ENCODE measurements at regions of chr14 and their contacts with region 1.

Region 1: GRCh38 chr14:35826218-35826951 is at the start of gene BRMS1L:
- DNase-seq: peak; percentile 99
- H3K4me3 ChIP-seq: peak within 1 kb of the TSS; percentile 61 to 92 (median 88)
- H3K27ac ChIP-seq: peak within 1 kb of the TSS; percentile 40
- H3K4me1 ChIP-seq: peaks cover 10% of the 10 kb centered on the region
- H3K27me3 ChIP-seq: no peaks in the 10 kb centered on the region
- CTCF ChIP-seq: peak in 1 of 2 donors; percentile 12
- POLR2A ChIP-seq: peak; percentile 98
- total RNA-seq, gene BRMS1L: 7.7 and 11.2 TPM in 2 replicates

Region 2: DNA sequence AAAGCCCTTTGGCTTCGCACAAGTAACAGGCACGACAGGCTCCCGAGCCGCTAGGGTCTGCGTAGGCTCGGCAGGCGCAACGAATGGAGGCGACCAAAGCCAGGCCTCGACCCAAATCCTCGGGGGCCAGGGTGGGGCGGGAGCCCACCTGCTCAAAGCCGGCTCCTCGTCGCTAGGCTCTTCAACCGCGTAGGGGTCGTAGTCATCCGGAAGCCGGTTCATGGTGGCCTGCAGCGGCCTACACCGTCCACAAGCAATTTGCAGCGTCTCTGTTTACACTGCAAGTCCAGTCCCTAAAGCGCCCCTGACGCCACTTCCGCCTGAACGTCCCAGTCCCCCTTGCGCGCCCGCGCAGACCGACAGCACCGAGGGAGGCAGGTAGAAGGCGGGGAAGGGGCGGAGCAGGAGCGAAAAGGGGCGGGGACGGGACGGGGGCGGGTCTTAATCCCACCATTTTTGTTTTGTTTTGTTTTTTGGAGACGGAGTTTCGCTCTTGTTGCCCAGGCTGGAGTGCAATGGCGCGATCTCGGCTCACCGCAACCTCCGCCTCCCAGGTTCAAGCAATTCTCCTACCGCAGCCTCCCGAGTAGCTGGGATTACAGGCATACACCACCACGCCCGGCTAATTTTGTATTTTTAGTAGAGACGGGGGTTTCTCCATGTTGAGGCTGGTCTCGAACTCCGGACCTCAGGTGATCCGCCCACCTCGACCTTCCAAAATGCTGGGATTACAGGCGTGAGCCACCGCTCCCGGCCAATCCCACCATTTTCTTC is 1286.8 kb before region 1 on chr14 and contains the start of gene EAPP:
- CTCF ChIA-PET with region 1: no interaction called
- POLR2A ChIA-PET with region 1: no interaction called
- dilution Hi-C with region 1: no loop called
- intact Hi-C with region 1: loop called (anchors 5 kb)
- DNase-seq: peak; percentile 96
- H3K4me3 ChIP-seq: peak within 1 kb of the TSS; percentile 58 to 85 (median 80)
- H3K27ac ChIP-seq: peak within 1 kb of the TSS; percentile 89
- H3K4me1 ChIP-seq: peaks cover 5% of the 10 kb centered on the region
- H3K27me3 ChIP-seq: no peaks in the 10 kb centered on the region
- CTCF ChIP-seq: no peak
- POLR2A ChIP-seq: peak; percentile 87
- total RNA-seq, gene EAPP: 22.2 and 24.3 TPM in 2 replicates

Region 3: GRCh38 chr14:35533357-35534207 is 292.8 kb before region 1 on chr14 and contains the start of gene INSM2:
- CTCF ChIA-PET with region 1: no interaction called
- POLR2A ChIA-PET with region 1: no interaction called
- dilution Hi-C with region 1: no loop called
- intact Hi-C with region 1: loop called (anchors 5 kb)
- DNase-seq: peak; percentile 60
- H3K4me3 ChIP-seq: peak within 1 kb of the TSS; percentile 48 to 80 (median 63)
- H3K27ac ChIP-seq: no peak within 1 kb of the TSS
- H3K4me1 ChIP-seq: peaks cover 17% of the 10 kb centered on the region
- H3K27me3 ChIP-seq: peaks cover 41 to 61% of the 10 kb centered on the region in 2 experiments
- CTCF ChIP-seq: no peak
- POLR2A ChIP-seq: no peak
- total RNA-seq, gene INSM2: not detected in 2 replicates

Region 4: GRCh38 chr14:35808076-35808652 is 18.2 kb before region 1 on chr14:
- CTCF ChIA-PET with region 1: interaction called, 7 read pairs
- POLR2A ChIA-PET with region 1: interaction called, 4 read pairs
- dilution Hi-C with region 1: no loop called
- intact Hi-C with region 1: loop called (anchors 1 kb)
- DNase-seq: peak; percentile 65
- H3K4me3 ChIP-seq: peak overlapping the region; percentile 54 to 91 (median 74)
- H3K27ac ChIP-seq: peak overlapping the region; percentile 18
- H3K4me1 ChIP-seq: peaks cover 8% of the 10 kb centered on the region
- H3K27me3 ChIP-seq: no peaks in the 10 kb centered on the region
- CTCF ChIP-seq: no peak
- POLR2A ChIP-seq: no peak

Region 5: DNA sequence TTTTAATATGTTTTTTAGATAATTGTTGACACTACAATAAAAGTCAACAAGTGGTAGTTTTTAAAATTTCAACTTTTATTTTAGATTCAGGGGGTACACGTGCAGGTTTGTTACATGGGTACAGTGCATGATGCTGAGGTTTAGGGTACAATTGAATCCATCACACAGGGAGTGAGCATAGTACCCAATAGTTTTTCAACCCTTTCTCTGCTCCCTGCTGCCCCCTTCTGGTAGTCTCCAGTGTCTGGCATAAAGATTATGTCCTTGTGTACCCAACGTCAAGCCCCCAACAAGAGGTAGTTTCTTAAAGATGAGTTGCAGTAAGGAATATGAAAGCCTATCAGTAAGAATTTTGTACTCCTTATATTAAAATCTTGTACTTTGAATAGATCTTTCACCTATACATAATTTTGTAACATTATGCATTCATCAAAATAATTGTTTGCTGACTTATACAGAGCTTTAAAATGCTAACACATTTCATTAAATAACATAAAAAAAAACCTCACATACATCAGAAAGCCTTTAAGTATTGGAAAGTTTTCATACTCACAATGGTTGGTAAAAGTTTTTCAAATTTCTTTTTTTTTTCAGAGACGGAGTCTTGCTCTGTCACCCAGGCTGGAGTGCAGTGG is 11.9 kb before region 1 on chr14:
- CTCF ChIA-PET with region 1: interaction called, 12 read pairs
- POLR2A ChIA-PET with region 1: interaction called, 4 read pairs
- dilution Hi-C with region 1: no loop called
- intact Hi-C with region 1: loop called (anchors 1 kb)
- DNase-seq: peak; percentile 66
- H3K4me3 ChIP-seq: no peak overlapping the region
- H3K27ac ChIP-seq: no peak overlapping the region
- H3K4me1 ChIP-seq: no peaks in the 10 kb centered on the region
- H3K27me3 ChIP-seq: peaks cover 2 to 10% of the 10 kb centered on the region in 2 experiments
- CTCF ChIP-seq: peak; percentile 64 to 75
- POLR2A ChIP-seq: no peak

Region 6: DNA sequence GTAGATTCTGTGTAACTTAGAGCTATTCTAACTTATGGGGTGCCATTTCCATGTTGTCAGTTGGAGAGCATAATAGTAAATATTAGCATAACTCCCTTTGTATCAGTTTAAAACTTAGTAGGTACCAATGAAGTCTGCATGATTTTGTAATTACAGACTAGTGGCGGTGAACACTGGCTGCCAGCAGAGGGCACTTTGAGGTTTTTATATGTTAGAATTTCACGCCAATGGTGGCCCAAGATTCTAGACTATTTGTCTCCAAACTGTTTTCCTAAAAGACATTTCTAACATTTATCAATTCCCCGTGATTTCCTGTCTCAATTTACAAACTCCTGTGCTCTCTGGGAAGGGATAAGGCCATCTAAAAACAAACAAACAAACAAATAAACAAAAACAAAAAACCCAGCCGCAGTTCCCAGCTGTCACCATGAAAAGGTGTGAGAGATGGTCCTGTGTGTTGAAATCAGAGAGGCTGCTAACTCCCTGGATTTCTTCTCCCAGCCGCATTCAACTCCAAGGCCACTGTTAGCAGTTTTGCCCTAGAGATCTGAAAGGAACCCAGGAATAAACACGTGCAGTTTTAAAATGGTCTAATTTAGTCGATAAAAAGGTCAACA is 57.4 kb after region 1 on chr14:
- CTCF ChIA-PET with region 1: interaction called, 7 read pairs
- POLR2A ChIA-PET with region 1: interaction called, 3 read pairs
- dilution Hi-C with region 1: no loop called
- intact Hi-C with region 1: loop called (anchors 5 kb)
- DNase-seq: no peak
- H3K4me3 ChIP-seq: no peak overlapping the region
- H3K27ac ChIP-seq: no peak overlapping the region
- H3K4me1 ChIP-seq: peaks cover 6% of the 10 kb centered on the region
- H3K27me3 ChIP-seq: peaks cover 2 to 4% of the 10 kb centered on the region in 2 experiments
- CTCF ChIP-seq: peak; percentile 52 to 53
- POLR2A ChIP-seq: no peak